ENCODE measurements at regions of chr4 and their contacts with region 1.

Region 1: DNA sequence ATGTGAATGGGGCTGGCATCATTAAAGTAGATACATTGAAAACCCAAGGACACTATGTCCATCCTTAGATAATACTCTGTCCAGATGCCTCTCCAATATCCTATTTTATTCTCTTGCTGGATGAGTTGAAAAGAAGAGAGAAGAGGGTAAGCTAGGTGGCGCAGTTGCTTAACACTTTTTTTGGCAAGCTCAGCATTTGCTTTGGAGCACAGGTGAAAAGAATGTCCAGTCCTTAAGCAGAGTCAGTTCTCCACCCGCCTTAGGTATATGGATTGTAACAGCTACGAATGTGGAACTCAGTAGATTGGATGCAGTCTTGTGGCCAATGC is 208.4 kb downstream of the NWD2 start:
- DNase-seq: peak in 10 of 14 experiments; percentile 2 to 70 (median 22)
- ATAC-seq: peak; percentile 47
- H3K4me3 ChIP-seq: peak overlapping the region; percentile 60
- H3K4me3 Mint-ChIP-seq: peak overlapping the region; percentile 83
- H3K27ac ChIP-seq: no peak overlapping the region
- H3K27ac Mint-ChIP-seq: no peak overlapping the region
- H3K4me1 ChIP-seq: peaks cover 16% of the 10 kb centered on the region
- H3K4me1 Mint-ChIP-seq: peaks cover 16% of the 10 kb centered on the region
- H3K27me3 ChIP-seq: peaks cover 23 to 52% of the 10 kb centered on the region in 2 experiments
- H3K27me3 Mint-ChIP-seq: peaks cover 70% of the 10 kb centered on the region
- CTCF ChIP-seq: peak; percentile 69

Region 2: DNA sequence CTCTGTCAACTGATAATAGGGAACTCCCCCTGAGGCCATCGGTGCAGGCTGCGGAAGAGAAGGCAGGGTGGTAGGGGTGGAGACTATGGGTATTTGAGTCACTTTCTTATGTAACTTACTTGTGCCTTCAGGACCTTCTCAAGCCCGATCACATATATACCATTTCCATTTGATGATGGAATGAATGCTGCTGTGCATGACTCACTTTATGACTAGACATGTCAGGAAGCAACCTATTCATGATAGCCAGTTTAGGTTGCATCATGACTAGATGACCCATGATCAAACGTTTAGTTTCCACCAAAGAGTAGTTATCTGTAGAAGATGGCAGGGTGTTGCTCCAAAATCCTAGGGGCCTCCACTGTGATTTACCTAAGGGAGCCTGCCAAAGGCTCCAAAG is 736.0 kb before region 1 on chr4:
- CTCF ChIA-PET with region 1: no interaction called
- POLR2A ChIA-PET with region 1: no interaction called
- intact Hi-C with region 1: no loop called
- DNase-seq: no peak
- ATAC-seq: no peak
- H3K4me3 ChIP-seq: no peak overlapping the region
- H3K4me3 Mint-ChIP-seq: no peak overlapping the region
- H3K27ac ChIP-seq: no peak overlapping the region
- H3K27ac Mint-ChIP-seq: no peak overlapping the region
- H3K4me1 ChIP-seq: no peaks in the 10 kb centered on the region
- H3K4me1 Mint-ChIP-seq: no peaks in the 10 kb centered on the region
- H3K27me3 ChIP-seq: no peaks in the 10 kb centered on the region
- H3K27me3 Mint-ChIP-seq: no peaks in the 10 kb centered on the region
- CTCF ChIP-seq: no peak

Region 3: DNA sequence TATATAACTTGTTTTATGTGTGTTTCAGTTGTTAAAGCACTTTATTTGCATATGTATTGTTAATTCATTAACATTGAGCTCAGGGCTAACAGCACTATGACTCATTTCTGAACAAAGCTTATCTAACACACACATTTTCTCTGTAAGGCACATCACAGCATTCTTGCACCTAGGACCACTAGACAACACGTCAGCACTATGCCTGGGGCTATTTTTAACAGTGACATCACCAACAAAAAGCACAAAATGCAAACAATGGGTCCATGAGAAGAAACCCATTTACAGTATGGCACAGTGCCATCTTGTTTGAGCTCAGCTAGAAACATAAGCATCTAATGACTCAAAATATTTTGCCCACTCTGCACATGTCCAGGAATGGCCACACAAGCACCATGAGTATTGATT is 108.9 kb after region 1 on chr4:
- CTCF ChIA-PET with region 1: interaction called, 4 read pairs
- POLR2A ChIA-PET with region 1: interaction called, 3 read pairs
- intact Hi-C with region 1: loop called (anchors 1 to 2 kb)
- DNase-seq: no peak
- ATAC-seq: no peak
- H3K4me3 ChIP-seq: no peak overlapping the region
- H3K4me3 Mint-ChIP-seq: no peak overlapping the region
- H3K27ac ChIP-seq: no peak overlapping the region
- H3K27ac Mint-ChIP-seq: no peak overlapping the region
- H3K4me1 ChIP-seq: no peaks in the 10 kb centered on the region
- H3K4me1 Mint-ChIP-seq: no peaks in the 10 kb centered on the region
- H3K27me3 ChIP-seq: no peaks in the 10 kb centered on the region
- H3K27me3 Mint-ChIP-seq: no peaks in the 10 kb centered on the region
- CTCF ChIP-seq: no peak

Region 4: GRCh38 chr4:37567841-37568240 is 114.9 kb after region 1 on chr4:
- CTCF ChIA-PET with region 1: interaction called, 4 read pairs
- POLR2A ChIA-PET with region 1: interaction called, 3 read pairs
- intact Hi-C with region 1: loop called (anchors 1 to 2 kb)
- DNase-seq: no peak
- ATAC-seq: no peak
- H3K4me3 ChIP-seq: no peak overlapping the region
- H3K4me3 Mint-ChIP-seq: no peak overlapping the region
- H3K27ac ChIP-seq: no peak overlapping the region
- H3K27ac Mint-ChIP-seq: no peak overlapping the region
- H3K4me1 ChIP-seq: no peaks in the 10 kb centered on the region
- H3K4me1 Mint-ChIP-seq: no peaks in the 10 kb centered on the region
- H3K27me3 ChIP-seq: no peaks in the 10 kb centered on the region
- H3K27me3 Mint-ChIP-seq: no peaks in the 10 kb centered on the region
- CTCF ChIP-seq: no peak

Region 5: DNA sequence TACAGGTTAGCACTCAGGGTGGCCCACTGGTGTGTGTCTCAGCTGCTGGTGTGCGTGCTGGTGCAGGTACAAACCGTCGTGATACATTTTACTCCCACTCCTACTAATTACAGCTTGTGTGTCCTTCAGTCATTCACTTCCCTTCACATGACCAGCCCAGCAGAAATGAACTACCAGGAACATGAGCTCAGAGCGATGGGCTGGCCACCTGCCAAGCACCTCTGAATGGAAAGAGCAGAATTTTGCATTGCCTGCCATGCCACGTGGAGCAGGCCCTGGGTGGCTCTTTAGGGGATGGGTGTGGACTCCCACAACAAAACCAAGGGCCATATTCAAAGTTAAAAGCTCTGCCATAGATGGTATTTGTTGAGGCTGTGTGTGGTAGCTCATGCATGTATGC is 314.6 kb after region 1 on chr4:
- CTCF ChIA-PET with region 1: no interaction called
- POLR2A ChIA-PET with region 1: no interaction called
- intact Hi-C with region 1: no loop called
- DNase-seq: no peak
- ATAC-seq: no peak
- H3K4me3 ChIP-seq: no peak overlapping the region
- H3K4me3 Mint-ChIP-seq: no peak overlapping the region
- H3K27ac ChIP-seq: no peak overlapping the region
- H3K27ac Mint-ChIP-seq: no peak overlapping the region
- H3K4me1 ChIP-seq: peaks cover 4% of the 10 kb centered on the region
- H3K4me1 Mint-ChIP-seq: peaks cover 6% of the 10 kb centered on the region
- H3K27me3 ChIP-seq: no peaks in the 10 kb centered on the region
- H3K27me3 Mint-ChIP-seq: no peaks in the 10 kb centered on the region
- CTCF ChIP-seq: no peak

Region 6: GRCh38 chr4:37793562-37793961 is 340.6 kb after region 1 on chr4:
- CTCF ChIA-PET with region 1: no interaction called
- POLR2A ChIA-PET with region 1: no interaction called
- intact Hi-C with region 1: loop called (anchors 5 to 10 kb)
- DNase-seq: peak in 5 of 14 experiments; percentile 13 to 61 (median 37)
- ATAC-seq: peak; percentile 73
- H3K4me3 ChIP-seq: no peak overlapping the region
- H3K4me3 Mint-ChIP-seq: no peak overlapping the region
- H3K27ac ChIP-seq: no peak overlapping the region
- H3K27ac Mint-ChIP-seq: no peak overlapping the region
- H3K4me1 ChIP-seq: no peaks in the 10 kb centered on the region
- H3K4me1 Mint-ChIP-seq: no peaks in the 10 kb centered on the region
- H3K27me3 ChIP-seq: no peaks in the 10 kb centered on the region
- H3K27me3 Mint-ChIP-seq: no peaks in the 10 kb centered on the region
- CTCF ChIP-seq: peak; percentile 56

Region 7: GRCh38 chr4:38034986-38035882 is 582.3 kb after region 1 on chr4:
- CTCF ChIA-PET with region 1: no interaction called
- POLR2A ChIA-PET with region 1: no interaction called
- intact Hi-C with region 1: loop called (anchors 5 to 10 kb)
- DNase-seq: peak in 6 of 14 experiments; percentile 9 to 75 (median 62)
- ATAC-seq: peak; percentile 54
- H3K4me3 ChIP-seq: no peak overlapping the region
- H3K4me3 Mint-ChIP-seq: no peak overlapping the region
- H3K27ac ChIP-seq: no peak overlapping the region
- H3K27ac Mint-ChIP-seq: no peak overlapping the region
- H3K4me1 ChIP-seq: no peaks in the 10 kb centered on the region
- H3K4me1 Mint-ChIP-seq: no peaks in the 10 kb centered on the region
- H3K27me3 ChIP-seq: no peaks in the 10 kb centered on the region
- H3K27me3 Mint-ChIP-seq: no peaks in the 10 kb centered on the region
- CTCF ChIP-seq: peak; percentile 79

Measured in CD4-positive, alpha-beta T cell (primary cell).